Activated naive CD4-positive, alpha-beta T cell treated with anti-CD3 and anti-CD28 coated beads for 36 hours (primary cell): ENCODE measurements at regions of chr3 and their contacts with region 1.

Region 1: GRCh38 chr3:48151058-48151806 is 37.0 kb downstream of the CDC25A start:
- DNase-seq: peak; percentile 75
- H3K4me3 Mint-ChIP-seq: no peak overlapping the region
- H3K27ac Mint-ChIP-seq: no peak overlapping the region
- H3K4me1 Mint-ChIP-seq: no peaks in the 10 kb centered on the region
- H3K27me3 Mint-ChIP-seq: no peaks in the 10 kb centered on the region

Region 2: GRCh38 chr3:47836986-47837385 is 314.2 kb before region 1 on chr3:
- CTCF ChIA-PET with region 1: interaction called, 3 read pairs
- intact Hi-C with region 1: loop called (anchors 1 kb)
- DNase-seq: no peak
- H3K4me3 Mint-ChIP-seq: no peak overlapping the region
- H3K27ac Mint-ChIP-seq: no peak overlapping the region
- H3K4me1 Mint-ChIP-seq: peaks cover 2% of the 10 kb centered on the region
- H3K27me3 Mint-ChIP-seq: no peaks in the 10 kb centered on the region

Region 3: DNA sequence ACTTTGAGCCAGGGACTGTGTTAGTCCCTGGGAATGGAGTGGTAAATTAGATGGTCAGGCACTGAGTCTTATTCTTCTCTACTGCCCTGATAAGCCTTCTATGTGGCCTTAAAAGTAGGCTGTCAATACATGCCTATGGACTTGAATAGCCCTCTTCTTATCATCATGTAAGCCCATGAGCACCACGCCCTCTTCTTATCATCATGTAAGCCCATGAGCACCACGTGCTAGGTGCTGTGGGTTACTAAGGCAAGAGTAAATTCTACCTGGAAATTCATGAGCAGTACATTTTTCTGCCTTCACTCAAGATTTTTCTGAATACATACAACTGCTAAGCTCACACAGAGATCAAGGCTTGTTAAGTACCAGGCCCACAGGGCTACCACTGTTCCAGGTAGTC is 279.8 kb before region 1 on chr3:
- CTCF ChIA-PET with region 1: no interaction called
- intact Hi-C with region 1: no loop called
- DNase-seq: no peak
- H3K4me3 Mint-ChIP-seq: no peak overlapping the region
- H3K27ac Mint-ChIP-seq: no peak overlapping the region
- H3K4me1 Mint-ChIP-seq: no peaks in the 10 kb centered on the region
- H3K27me3 Mint-ChIP-seq: no peaks in the 10 kb centered on the region

Region 4: GRCh38 chr3:47954567-47954966 is 196.7 kb before region 1 on chr3:
- CTCF ChIA-PET with region 1: no interaction called
- intact Hi-C with region 1: no loop called
- DNase-seq: no peak
- H3K4me3 Mint-ChIP-seq: no peak overlapping the region
- H3K27ac Mint-ChIP-seq: no peak overlapping the region
- H3K4me1 Mint-ChIP-seq: no peaks in the 10 kb centered on the region
- H3K27me3 Mint-ChIP-seq: no peaks in the 10 kb centered on the region

Region 5: GRCh38 chr3:48058091-48058490 is 93.1 kb before region 1 on chr3:
- CTCF ChIA-PET with region 1: no interaction called
- intact Hi-C with region 1: no loop called
- DNase-seq: no peak
- H3K4me3 Mint-ChIP-seq: no peak overlapping the region
- H3K27ac Mint-ChIP-seq: no peak overlapping the region
- H3K4me1 Mint-ChIP-seq: peaks cover 10% of the 10 kb centered on the region
- H3K27me3 Mint-ChIP-seq: no peaks in the 10 kb centered on the region